ENCODE measurements at regions of chrX and their contacts with region 1.

Region 1: DNA sequence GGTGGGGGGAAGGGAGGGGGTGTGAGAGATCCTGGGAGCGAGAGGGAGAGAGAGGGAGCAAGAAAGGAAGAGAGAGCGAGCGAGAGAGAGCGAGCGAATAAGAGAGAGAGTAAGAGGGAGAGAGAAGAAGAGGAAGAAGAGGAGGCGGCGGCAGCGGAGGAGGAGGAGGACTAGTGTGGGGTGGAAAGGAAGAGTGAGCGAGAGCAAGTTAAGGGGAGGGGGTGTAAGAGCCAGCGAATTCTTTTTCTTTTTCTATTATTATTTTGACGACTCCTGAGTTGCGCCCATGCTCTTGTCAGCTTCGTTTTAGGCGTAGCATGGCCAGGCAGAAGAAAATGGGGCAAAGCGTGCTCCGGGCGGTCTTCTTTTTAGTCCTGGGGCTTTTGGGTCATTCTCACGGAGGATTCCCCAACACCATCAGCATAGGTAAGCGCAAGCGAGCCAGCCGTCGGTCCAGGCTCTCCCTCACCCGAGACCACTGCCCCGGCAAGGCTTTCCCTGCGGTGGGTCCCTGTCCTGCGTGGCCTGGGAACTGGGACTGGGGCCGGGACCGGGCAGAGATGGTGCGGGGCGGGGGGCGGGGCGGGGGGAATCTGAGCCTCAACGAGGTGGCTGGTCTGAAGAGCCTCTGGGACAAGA is at the start of gene GRIA3:
- DNase-seq: peak in 39 of 42 donors; percentile 17 to 72 (median 46)

Region 2: GRCh38 chrX:122248681-122249080 is 935.7 kb before region 1 on chrX:
- intact Hi-C with region 1: no loop called
- DNase-seq: no peak

Region 3: DNA sequence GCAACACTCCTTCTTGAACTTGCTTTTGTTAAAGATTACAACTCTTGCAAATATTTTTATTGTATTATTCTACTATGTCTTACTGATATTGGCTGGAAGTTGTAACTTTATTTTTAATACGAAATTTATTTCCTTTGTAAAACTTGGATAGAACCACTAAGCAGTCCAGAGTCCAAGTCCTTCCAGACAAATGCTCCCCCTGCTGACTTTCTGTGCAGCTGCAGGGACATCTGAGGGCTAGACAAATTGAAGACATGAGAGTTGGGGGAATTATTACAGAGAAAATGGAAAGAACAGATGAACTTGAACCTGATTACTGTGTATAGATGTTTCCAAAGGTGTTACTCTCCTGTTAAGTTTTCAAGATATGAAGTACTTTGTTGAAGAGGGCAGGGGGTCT is 238.5 kb after region 1 on chrX:
- intact Hi-C with region 1: loop called (anchors 10 kb)
- DNase-seq: peak in 33 of 42 donors; percentile 4 to 68 (median 26)